Panc1 (cell line): ENCODE measurements at regions of chr14 and their contacts with region 1.

Region 1: GRCh38 chr14:60695327-60695726 is 28.8 kb downstream of the SIX4 start:
- DNase-seq: no peak
- ATAC-seq: no peak
- H3K4me3 ChIP-seq: no peak overlapping the region
- H3K27ac ChIP-seq: no peak overlapping the region
- H3K4me1 ChIP-seq: no peaks in the 10 kb centered on the region
- H3K27me3 ChIP-seq: no peaks in the 10 kb centered on the region
- CTCF ChIP-seq: no peak

Region 2: DNA sequence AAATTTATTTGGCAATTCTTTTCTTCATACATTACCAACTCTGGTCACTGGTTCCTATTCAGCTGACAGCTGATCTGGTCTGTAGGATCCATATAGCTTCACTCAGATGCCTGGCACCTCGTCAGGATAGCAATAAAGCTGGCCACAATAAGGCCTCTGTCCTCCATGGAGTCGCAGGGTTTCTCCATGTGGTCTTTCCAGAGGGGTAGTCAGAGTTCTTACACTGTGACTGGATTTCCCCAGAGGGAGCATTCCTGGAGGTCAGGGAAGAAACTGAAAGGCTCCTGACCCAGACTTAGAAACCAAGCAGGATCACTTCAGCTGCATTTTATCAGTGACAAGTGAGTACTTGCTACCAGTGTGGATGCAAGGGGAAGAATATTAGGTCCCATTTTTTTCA is 11.1 kb before region 1 on chr14:
- CTCF ChIA-PET with region 1: interaction called, 18 read pairs
- POLR2A ChIA-PET with region 1: no interaction called
- in situ Hi-C with region 1: no loop called
- intact Hi-C with region 1: no loop called
- DNase-seq: no peak
- ATAC-seq: no peak
- H3K4me3 ChIP-seq: no peak overlapping the region
- H3K27ac ChIP-seq: no peak overlapping the region
- H3K4me1 ChIP-seq: no peaks in the 10 kb centered on the region
- H3K27me3 ChIP-seq: no peaks in the 10 kb centered on the region
- CTCF ChIP-seq: no peak

Region 3: GRCh38 chr14:60805841-60806569 is 110.7 kb after region 1 on chr14:
- CTCF ChIA-PET with region 1: no interaction called
- POLR2A ChIA-PET with region 1: interaction called, 13 read pairs
- in situ Hi-C with region 1: no loop called
- intact Hi-C with region 1: no loop called
- DNase-seq: no peak
- ATAC-seq: no peak
- H3K4me3 ChIP-seq: no peak overlapping the region
- H3K27ac ChIP-seq: no peak overlapping the region
- H3K4me1 ChIP-seq: no peaks in the 10 kb centered on the region
- H3K27me3 ChIP-seq: no peaks in the 10 kb centered on the region
- CTCF ChIP-seq: no peak